Heart right ventricle (tissue), 16 donors: ENCODE measurements at regions of chr10 and their contacts with region 1.

Region 1: DNA sequence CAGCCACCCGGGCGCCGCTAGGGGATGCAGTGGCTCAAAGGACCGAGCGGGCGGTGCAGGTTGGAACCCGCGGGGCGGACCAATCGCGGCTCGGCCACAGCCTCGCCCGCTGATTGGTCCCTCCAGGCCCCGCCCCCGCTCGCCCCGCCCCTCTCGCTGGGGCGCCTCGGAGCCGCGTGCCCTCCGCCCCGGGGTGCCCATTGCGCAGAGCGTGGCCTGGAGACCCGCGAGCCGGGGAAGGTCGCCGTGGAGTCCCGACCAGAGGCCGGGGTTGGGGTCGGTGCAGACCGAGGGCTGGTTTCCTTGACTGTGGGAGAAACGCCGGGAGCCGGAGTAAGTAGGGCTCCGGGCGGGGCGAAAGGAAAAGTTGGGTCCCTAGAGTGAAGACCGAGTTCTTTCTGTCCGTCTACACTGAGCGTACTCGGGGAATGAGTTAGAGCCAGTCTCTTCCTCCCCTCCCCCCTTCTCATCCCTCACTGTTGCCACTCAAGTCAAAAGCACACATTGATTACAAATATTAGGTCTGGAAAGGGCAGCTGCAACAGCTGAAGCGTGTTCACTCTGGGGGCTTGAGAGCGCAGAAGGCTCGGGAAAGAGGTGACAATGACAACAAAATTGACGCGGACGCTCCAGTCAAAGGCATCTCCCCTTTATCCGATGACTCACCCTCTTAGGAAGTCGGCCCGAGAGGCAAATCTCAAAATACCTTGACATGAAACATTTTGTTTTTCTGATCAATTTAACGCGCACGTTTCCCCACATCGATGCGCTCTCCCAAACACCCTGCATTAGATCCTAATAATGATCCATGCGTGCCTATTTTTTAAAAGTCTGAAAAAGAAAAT is 820 bp upstream of the GATA3 start:
- DNase-seq: peak; percentile 83 to 87
- ATAC-seq: peak; percentile 83 to 92 (median 90)
- H3K4me3 ChIP-seq: peak overlapping the region; percentile 30 to 68 (median 60)
- H3K27ac ChIP-seq: peak overlapping the region in 9 of 10 donors; percentile 45 to 89 (median 75)
- H3K4me1 ChIP-seq: peaks cover 8 to 77% (median 57%) of the 10 kb centered on the region in 9 donors
- H3K27me3 ChIP-seq: peaks cover 29 to 100% (median 94%) of the 10 kb centered on the region in 7 donors
- CTCF ChIP-seq: peak in 8 of 9 donors; percentile 72 to 88 (median 79)

Region 2: GRCh38 chr10:7818295-7819122 is 235.2 kb before region 1 on chr10 and contains the start of gene TAF3:
- intact Hi-C with region 1: loop called in 1 of 10 experiments (anchors 1 kb)
- DNase-seq: peak; percentile 91 to 92
- ATAC-seq: peak; percentile 89 to 95 (median 93)
- H3K4me3 ChIP-seq: peak within 1 kb of the TSS; percentile 67 to 100 (median 96)
- H3K27ac ChIP-seq: peak within 1 kb of the TSS in 9 of 10 donors; percentile 61 to 88 (median 83)
- H3K4me1 ChIP-seq: peaks cover 0 to 29% (median 22%) of the 10 kb centered on the region in 9 donors
- H3K27me3 ChIP-seq: peaks cover 0 to 7% (median 0%) of the 10 kb centered on the region in 7 donors
- CTCF ChIP-seq: no peak
- total RNA-seq, gene TAF3: 9.9 to 14.9 (median 11.2) TPM

Region 3: DNA sequence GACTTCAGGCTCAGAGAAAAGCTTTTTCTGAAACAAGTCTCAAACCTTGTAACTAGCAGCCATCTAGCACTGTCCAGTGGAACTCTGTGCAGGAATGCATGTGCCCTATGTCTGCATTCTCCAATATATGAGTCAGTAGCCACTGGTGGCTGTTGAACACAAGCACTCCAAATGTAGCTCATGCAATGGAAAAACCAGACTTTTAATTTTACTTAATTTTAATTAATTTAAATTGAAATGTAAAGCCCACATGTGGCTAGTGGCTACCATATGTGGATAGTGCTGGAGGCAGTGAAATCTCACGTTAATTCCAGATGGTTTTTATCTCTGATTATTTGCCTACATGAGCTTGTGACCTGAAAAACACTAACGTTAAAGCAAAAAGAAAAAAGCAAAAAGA is 225.9 kb after region 1 on chr10:
- intact Hi-C with region 1: loop called in 2 of 10 experiments (anchors 10 kb)
- DNase-seq: no peak
- ATAC-seq: no peak
- H3K4me3 ChIP-seq: no peak overlapping the region
- H3K27ac ChIP-seq: no peak overlapping the region
- H3K4me1 ChIP-seq: peaks cover 0 to 6% (median 0%) of the 10 kb centered on the region in 9 donors
- H3K27me3 ChIP-seq: peaks cover 0 to 15% (median 0%) of the 10 kb centered on the region in 7 donors
- CTCF ChIP-seq: no peak

Region 4: DNA sequence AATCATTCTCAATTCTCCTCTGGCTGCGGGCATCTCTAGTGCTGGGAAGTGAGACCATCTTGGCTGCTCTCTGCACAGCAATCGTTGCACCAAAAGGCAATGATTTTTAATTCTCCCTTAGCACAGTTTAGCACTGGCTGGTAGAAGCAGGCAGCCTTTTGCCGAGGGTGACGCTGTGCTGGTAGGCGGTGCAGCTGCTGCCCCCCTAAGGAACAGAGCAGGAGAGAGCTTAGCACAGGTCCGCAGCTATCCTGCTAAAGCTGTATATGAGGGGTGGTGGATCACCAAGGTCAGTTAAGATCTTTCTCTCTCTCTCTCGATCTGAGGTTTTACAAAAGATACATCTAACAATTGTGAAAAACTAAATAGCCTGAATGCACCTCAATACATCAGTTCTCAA is 391.0 kb after region 1 on chr10:
- intact Hi-C with region 1: loop called in 2 of 10 experiments (anchors 10 kb)
- DNase-seq: no peak
- ATAC-seq: peak in 3 of 8 donors; percentile 50 to 63 (median 55)
- H3K4me3 ChIP-seq: no peak overlapping the region
- H3K27ac ChIP-seq: no peak overlapping the region
- H3K4me1 ChIP-seq: peaks cover 0 to 9% (median 0%) of the 10 kb centered on the region in 9 donors
- H3K27me3 ChIP-seq: peaks cover 0 to 46% (median 10%) of the 10 kb centered on the region in 7 donors
- CTCF ChIP-seq: peak in 7 of 9 donors; percentile 7 to 41 (median 27)

Region 5: DNA sequence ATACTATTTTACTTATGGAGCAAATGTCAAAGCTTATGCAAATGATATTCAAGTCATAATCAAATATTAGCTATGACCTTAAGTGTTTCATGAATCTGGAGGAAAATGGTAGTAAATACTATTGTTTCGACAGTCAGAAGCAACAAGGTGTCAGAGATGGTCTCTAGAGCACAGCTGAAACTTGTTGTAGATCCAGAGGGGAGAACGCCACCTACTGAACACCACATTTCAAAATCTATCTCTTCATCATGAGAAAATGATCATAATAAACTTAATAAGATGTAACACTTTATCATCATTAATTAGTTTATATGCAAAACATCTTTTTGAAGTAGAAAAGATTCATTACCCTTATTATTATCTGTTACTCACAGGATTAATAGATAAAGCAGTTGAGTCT is 419.5 kb after region 1 on chr10:
- intact Hi-C with region 1: loop called in 3 of 10 experiments (anchors 5 to 10 kb)
- DNase-seq: no peak
- ATAC-seq: no peak
- H3K4me3 ChIP-seq: no peak overlapping the region
- H3K27ac ChIP-seq: no peak overlapping the region
- H3K4me1 ChIP-seq: no peaks in the 10 kb centered on the region
- H3K27me3 ChIP-seq: peaks cover 0 to 7% (median 0%) of the 10 kb centered on the region in 7 donors
- CTCF ChIP-seq: peak in 6 of 9 donors; percentile 27 to 48 (median 30)